ENCODE measurements at regions of chr12 and their contacts with region 1.

Region 1: GRCh38 chr12:111396726-111397445 is 8.8 kb upstream of the SH2B3 start:
- DNase-seq: peak; percentile 75
- H3K4me3 Mint-ChIP-seq: peak overlapping the region; percentile 65
- H3K27ac Mint-ChIP-seq: no peak overlapping the region
- H3K4me1 Mint-ChIP-seq: peaks cover 10% of the 10 kb centered on the region
- H3K27me3 Mint-ChIP-seq: no peaks in the 10 kb centered on the region
- CTCF ChIP-seq: peak; percentile 98

Region 2: GRCh38 chr12:111368788-111369495 is 27.9 kb before region 1 on chr12 and contains the start of gene PHETA1:
- CTCF ChIA-PET with region 1: interaction called, 10 read pairs
- POLR2A ChIA-PET with region 1: interaction called, 16 read pairs
- intact Hi-C with region 1: no loop called
- DNase-seq: peak; percentile 89
- H3K4me3 Mint-ChIP-seq: peak within 1 kb of the TSS; percentile 80
- H3K27ac Mint-ChIP-seq: no peak within 1 kb of the TSS
- H3K4me1 Mint-ChIP-seq: peaks cover 25% of the 10 kb centered on the region
- H3K27me3 Mint-ChIP-seq: no peaks in the 10 kb centered on the region
- CTCF ChIP-seq: no peak
- total RNA-seq, gene PHETA1: 3.4 and 4.0 TPM in 2 replicates

Region 3: DNA sequence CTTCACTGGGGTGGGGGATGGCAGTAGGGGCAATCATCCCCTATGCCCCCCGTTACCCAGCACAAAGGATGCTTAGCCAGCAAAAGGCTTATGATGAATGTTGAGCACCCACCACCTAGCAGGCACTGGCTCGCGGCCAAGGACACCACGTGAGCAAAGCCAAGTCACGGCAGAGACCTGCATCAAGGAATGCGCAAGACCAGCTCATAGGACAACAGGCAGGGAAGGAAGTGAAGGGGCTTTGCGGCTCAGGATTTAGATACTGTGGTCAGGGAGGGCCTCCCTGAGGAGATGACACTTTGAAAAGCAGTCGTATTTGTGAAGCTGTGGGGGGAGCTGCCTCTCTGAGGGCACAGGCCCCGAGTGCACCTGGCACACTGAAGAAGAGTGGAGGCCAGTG is 41.6 kb after region 1 on chr12:
- CTCF ChIA-PET with region 1: interaction called, 19 read pairs
- POLR2A ChIA-PET with region 1: interaction called, 7 read pairs
- intact Hi-C with region 1: no loop called
- DNase-seq: peak; percentile 82
- H3K4me3 Mint-ChIP-seq: no peak overlapping the region
- H3K27ac Mint-ChIP-seq: peak overlapping the region; percentile 50
- H3K4me1 Mint-ChIP-seq: peaks cover 41% of the 10 kb centered on the region
- H3K27me3 Mint-ChIP-seq: no peaks in the 10 kb centered on the region
- CTCF ChIP-seq: no peak

Region 4: GRCh38 chr12:111451649-111452129 is 54.8 kb after region 1 on chr12:
- CTCF ChIA-PET with region 1: interaction called, 183 read pairs
- POLR2A ChIA-PET with region 1: interaction called, 13 read pairs
- intact Hi-C with region 1: loop called (anchors 1 kb)
- DNase-seq: peak; percentile 56
- H3K4me3 Mint-ChIP-seq: no peak overlapping the region
- H3K27ac Mint-ChIP-seq: no peak overlapping the region
- H3K4me1 Mint-ChIP-seq: peaks cover 6% of the 10 kb centered on the region
- H3K27me3 Mint-ChIP-seq: no peaks in the 10 kb centered on the region
- CTCF ChIP-seq: peak; percentile 61

Region 5: DNA sequence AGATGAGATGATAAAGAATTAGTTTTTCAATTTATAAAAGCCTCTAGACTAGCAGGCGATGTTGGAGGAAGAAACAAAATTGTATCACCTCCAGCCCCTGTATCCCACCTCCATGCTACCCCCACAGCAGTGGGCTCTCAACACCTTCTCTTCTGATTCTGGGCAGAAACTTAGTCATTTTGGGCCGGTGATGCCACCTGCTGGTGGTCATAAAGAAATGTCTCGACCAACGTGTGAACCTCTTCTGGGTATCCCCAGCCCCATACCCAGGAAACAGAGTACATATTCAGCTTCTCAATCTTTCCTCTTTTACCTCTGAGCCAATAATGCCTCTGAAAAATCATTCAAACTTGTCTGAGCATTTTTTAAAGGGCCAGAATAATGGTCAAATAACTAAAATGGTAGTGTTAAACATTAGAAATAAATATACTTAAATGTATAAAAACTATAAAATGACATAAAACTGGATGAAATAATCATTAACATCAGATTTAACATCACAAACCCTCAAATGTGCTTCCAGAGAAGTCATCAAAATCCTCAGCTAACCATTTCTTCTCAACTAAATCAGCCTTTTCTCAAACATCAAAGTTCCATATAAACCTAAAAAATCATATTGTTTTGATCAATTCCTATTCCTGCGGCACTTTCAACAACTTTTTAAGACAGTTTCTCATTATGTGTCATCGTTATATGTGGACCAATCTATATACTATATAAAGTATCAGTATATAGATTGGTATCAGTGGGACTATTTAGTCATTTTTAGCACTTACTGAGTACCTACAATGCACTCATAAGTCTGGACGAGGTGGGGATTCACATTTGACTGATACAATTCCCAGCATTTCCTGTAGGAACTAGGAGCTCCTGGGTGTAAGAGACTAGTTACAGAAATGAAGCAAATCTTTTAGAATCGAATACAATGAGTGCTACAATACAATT is 132.8 kb after region 1 on chr12:
- CTCF ChIA-PET with region 1: interaction called, 28 read pairs
- POLR2A ChIA-PET with region 1: no interaction called
- intact Hi-C with region 1: loop called (anchors 2 kb)
- DNase-seq: peak; percentile 71
- H3K4me3 Mint-ChIP-seq: no peak overlapping the region
- H3K27ac Mint-ChIP-seq: no peak overlapping the region
- H3K4me1 Mint-ChIP-seq: no peaks in the 10 kb centered on the region
- H3K27me3 Mint-ChIP-seq: no peaks in the 10 kb centered on the region
- CTCF ChIP-seq: peak; percentile 55